PC-9 (cell line): ENCODE measurements at regions of chr3 and their contacts with region 1.

Region 1: GRCh38 chr3:99188936-99189335 is 287.4 kb upstream of the DCBLD2 start:
- DNase-seq: no peak
- H3K4me3 ChIP-seq: no peak overlapping the region
- H3K27ac ChIP-seq: no peak overlapping the region
- H3K4me1 ChIP-seq: no peaks in the 10 kb centered on the region
- H3K27me3 ChIP-seq: no peaks in the 10 kb centered on the region
- CTCF ChIP-seq: no peak

Region 2: DNA sequence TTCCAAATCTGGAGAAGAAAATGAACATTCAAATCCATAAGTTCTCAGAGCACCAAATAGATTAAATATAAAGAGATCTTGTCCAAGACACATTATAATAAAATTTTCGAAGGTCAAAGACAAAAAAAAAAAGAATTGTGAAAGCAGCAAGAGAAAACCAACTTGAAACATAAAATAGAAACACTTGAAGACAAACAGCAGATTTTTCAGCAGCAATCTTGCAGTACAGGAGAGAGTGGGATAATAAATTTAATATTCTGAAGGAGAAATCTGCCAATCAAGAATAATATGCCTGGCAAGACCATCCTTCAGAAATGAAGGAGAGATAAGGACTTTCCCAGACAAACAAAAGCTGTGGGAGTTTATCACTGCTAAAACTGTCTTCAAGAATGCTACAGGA is 299.0 kb after region 1 on chr3:
- CTCF ChIA-PET with region 1: no interaction called
- POLR2A ChIA-PET with region 1: no interaction called
- intact Hi-C with region 1: loop called (anchors 1 kb)
- DNase-seq: no peak
- H3K4me3 ChIP-seq: no peak overlapping the region
- H3K27ac ChIP-seq: no peak overlapping the region
- H3K4me1 ChIP-seq: no peaks in the 10 kb centered on the region
- H3K27me3 ChIP-seq: no peaks in the 10 kb centered on the region
- CTCF ChIP-seq: no peak